GM10248 (cell line): ENCODE measurements at regions of chr14 and their contacts with region 1.

Region 1: DNA sequence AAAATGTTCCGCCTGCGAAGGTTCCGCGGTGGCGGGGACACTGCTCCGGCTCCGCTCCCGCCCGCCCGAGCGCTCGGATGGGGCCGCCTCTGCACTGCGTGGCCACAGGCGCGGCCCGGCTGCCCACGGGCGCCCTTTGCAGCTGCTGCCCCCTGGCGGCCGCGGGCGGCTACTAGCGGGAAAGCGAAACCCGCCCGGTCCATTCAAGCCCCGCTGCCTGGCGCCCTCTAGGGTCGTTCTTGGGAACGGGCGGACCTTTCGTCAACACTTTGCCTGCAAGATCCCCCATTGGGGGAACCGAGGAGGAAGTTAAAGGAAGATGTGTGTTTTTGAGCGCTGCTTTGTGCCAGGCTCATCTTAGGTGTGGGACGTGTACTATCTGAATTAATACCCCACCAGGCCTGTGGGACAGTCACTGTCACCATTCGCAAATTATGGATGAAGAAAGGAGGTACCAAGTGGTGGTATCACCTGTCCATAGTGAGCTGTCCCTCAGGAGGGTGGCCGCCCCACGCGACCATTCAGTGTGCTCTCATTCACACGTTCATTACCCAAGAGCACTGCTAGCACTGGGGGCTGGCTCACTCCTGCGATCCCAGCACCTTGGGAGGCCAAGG is 19.4 kb downstream of the GPR132 start:
- DNase-seq: peak; percentile 94
- CTCF ChIP-seq: peak; percentile 100

Region 2: DNA sequence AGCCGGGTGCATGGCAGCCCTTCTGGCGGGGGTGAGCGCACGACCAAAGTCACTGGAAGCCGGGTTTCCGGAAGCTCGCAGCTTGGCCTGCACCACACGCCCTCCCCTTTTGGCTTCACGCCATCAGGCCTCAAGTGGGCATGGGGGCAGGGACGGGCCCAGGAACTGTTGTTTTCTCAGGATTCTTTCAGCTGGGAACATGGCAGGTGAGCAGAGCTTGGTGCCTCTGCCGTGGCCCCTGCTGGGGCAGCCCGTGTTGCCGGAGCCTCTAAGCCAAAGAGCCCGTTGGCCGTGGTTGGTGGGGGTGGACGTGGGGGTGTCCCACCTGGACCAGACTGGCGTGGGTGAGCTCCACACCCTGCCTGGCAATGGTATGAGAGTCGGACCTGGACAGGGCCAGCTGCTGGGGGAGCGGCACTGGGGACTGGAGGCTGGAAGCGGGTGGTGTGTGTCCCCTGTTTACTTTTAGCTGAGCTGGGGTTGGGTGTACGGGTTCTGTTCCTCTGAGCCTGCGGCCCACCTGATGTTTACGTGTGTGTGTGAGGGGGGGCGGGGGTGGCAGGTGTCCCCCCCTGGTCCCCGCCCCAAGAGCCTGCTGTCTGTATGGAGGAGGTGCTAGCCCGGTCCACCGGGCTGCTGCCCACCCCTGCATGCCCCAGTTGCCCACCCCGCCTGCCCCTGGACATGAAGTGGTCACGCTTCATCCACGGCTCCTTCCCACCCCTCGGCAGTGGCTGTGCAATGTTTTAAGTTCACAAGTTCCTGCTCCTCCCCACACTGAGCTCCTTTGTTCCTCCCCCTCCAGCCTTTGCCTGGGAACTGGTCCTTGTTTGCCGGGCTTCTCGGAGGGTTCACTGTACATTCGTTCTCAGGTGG is 149.8 kb before region 1 on chr14:
- CTCF ChIA-PET with region 1: interaction called, 26 read pairs
- POLR2A ChIA-PET with region 1: interaction called, 4 read pairs
- DNase-seq: no peak
- CTCF ChIP-seq: no peak

Region 3: GRCh38 chr14:104976198-104977007 is 69.4 kb before region 1 on chr14:
- CTCF ChIA-PET with region 1: interaction called, 177 read pairs
- POLR2A ChIA-PET with region 1: no interaction called
- DNase-seq: peak; percentile 88
- CTCF ChIP-seq: peak; percentile 97

Region 4: GRCh38 chr14:105012171-105012985 is 33.4 kb before region 1 on chr14:
- CTCF ChIA-PET with region 1: interaction called, 37 read pairs
- POLR2A ChIA-PET with region 1: no interaction called
- DNase-seq: peak; percentile 6
- CTCF ChIP-seq: no peak

Region 5: DNA sequence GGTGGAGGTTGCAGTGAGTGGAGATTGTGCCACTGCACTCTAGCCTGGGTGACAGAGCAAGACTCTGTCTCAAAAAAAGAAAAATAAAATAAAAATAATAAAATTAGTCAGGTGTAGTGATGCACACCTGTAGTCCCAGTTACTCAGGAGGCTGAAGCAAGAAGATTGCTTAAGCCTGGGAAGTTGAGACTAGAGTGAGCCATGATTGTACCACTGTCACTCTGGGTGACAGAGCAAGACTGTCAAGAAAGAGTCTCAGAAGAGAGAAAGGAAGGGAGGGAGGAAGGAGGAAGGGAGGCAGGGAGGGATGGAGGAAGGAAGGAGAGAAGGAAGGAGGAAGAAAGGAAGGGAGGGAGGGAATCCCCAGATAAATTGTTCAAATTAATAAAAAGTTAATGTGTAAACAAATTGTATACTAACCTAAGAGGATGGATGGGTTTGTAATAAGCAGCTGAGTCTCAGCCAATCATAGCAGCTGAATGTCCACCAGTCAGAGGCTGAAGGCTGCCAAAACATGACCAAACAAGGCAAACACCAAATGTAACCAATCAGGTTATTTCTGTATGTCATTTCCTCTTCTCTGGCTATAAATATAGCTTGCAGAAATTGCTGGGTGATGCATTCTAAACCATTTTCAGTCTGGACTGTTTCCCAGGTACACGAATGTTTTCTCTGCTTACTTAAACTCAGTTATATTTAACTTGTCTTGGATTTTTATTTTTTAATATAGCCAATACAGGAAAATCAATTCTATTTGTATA is 18.8 kb before region 1 on chr14:
- CTCF ChIA-PET with region 1: interaction called, 37 read pairs
- POLR2A ChIA-PET with region 1: no interaction called
- DNase-seq: peak; percentile 39
- CTCF ChIP-seq: no peak

Region 6: DNA sequence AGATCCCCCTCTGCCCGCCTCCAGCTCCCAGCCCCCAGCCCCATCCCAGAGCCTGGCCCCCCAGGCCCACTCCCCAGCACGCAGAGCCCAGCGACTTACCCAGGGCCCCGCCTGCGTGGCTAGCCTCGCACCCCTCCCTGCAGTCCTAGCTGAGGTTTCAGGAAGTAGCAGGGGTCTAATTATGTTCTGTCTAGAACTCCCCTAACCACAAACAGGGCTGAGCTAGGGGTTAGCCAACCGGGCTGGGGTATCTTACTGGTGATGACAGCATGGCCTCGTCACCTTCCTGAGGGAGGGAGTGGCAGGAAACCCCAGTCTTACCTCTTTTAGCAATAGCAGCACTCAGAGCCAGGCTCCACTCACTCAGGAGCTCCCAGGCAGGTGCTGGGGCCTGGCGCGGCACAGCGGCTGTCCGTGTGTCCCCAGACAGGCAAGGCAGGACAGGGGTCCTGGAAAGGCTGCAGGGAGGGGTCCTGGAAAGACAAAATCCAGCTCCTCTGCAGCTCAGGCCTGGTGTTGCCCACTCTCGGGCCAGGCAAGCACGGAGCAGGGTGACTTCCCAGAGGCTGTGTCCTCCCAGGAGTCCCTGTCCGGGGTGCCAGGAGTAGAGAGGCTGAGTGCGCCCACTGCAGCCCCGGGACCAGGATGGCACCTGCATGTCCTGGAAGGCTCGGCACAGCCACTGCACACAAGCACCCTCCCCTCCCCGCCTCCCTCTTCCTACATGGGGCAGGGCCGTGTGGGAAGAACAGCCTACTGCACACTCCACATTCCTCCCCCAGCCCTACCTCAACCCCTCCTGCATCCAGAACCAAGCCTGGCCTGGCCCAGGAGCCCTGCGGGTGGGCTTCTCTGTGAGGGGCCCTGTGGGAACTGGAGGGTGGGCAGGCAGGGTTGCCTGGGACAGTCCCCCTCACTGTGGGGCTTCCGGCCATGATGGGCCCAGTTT is 19.7 kb after region 1 on chr14 and contains the start of gene GPR132:
- CTCF ChIA-PET with region 1: interaction called, 148 read pairs
- POLR2A ChIA-PET with region 1: no interaction called
- DNase-seq: peak; percentile 91
- CTCF ChIP-seq: no peak